ENCODE measurements at regions of chr9 and their contacts with region 1.

Region 1: GRCh38 chr9:38682718-38683117 is 37.2 kb downstream of the FAM240B start:
- DNase-seq: peak; percentile 72
- H3K4me3 ChIP-seq: no peak overlapping the region
- H3K27ac ChIP-seq: peak overlapping the region; percentile 57
- H3K27me3 ChIP-seq: no peaks in the 10 kb centered on the region
- CTCF ChIP-seq: no peak

Region 2: DNA sequence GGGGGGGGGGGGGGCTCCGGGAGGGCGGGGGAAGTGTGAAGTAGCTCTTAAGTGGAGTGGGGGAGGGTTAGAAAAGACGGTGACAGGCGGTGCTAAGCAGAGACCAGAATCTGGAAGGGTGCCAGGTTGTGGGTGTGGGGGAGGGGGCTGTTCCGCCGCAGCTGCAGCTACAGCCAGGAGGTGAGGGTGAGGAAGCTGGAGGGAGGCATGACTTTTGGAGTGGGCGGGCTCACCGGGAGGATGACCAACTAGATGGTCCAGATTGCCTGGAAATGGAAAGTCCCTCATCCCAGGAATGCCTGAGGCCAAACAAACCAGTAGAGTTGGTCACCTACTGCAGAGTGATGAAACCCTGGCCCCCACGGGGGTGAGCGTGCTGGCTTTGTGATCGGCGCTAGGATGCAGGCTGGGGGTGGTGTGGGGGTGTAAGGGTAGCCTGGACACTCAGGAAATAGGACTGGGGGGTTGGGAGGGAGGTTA is 455.6 kb before region 1 on chr9:
- CTCF ChIA-PET with region 1: no interaction called
- POLR2A ChIA-PET with region 1: no interaction called
- DNase-seq: peak; percentile 80
- H3K4me3 ChIP-seq: peak overlapping the region; percentile 31
- H3K27ac ChIP-seq: peak overlapping the region; percentile 70
- H3K27me3 ChIP-seq: peaks cover 28% of the 10 kb centered on the region
- CTCF ChIP-seq: no peak

Region 3: GRCh38 chr9:38362852-38363593 is 319.7 kb before region 1 on chr9:
- CTCF ChIA-PET with region 1: no interaction called
- POLR2A ChIA-PET with region 1: no interaction called
- DNase-seq: peak; percentile 67
- H3K4me3 ChIP-seq: no peak overlapping the region
- H3K27ac ChIP-seq: no peak overlapping the region
- H3K27me3 ChIP-seq: peaks cover 3% of the 10 kb centered on the region
- CTCF ChIP-seq: peak; percentile 80

Region 4: GRCh38 chr9:38467404-38467803 is 215.3 kb before region 1 on chr9:
- CTCF ChIA-PET with region 1: no interaction called
- POLR2A ChIA-PET with region 1: no interaction called
- DNase-seq: no peak
- H3K4me3 ChIP-seq: no peak overlapping the region
- H3K27ac ChIP-seq: no peak overlapping the region
- H3K27me3 ChIP-seq: peaks cover 5% of the 10 kb centered on the region
- CTCF ChIP-seq: no peak

Region 5: DNA sequence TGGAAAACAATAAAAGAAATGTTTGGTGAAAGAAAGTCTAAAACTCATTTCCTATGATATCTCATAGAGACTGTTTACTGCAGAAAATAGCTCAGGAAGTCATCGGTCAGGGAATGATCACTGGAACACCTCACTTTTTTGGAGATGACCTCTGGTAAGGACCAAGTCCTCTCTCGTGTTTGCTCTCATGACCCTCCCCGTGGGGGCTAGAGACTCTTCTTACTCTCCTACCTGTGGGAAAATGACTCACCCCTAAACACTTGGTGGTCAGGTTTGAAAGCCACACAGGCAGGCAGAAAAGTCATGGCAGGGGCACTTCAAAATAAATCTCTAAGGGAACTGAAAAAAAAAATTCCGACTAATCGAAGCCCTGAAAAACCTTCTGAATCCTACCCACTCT is 11.0 kb before region 1 on chr9:
- CTCF ChIA-PET with region 1: interaction called, 14 read pairs
- POLR2A ChIA-PET with region 1: interaction called, 4 read pairs
- DNase-seq: no peak
- H3K4me3 ChIP-seq: no peak overlapping the region
- H3K27ac ChIP-seq: no peak overlapping the region
- H3K27me3 ChIP-seq: no peaks in the 10 kb centered on the region
- CTCF ChIP-seq: no peak